ENCODE measurements at regions of chr5 and their contacts with region 1.

Region 1: DNA sequence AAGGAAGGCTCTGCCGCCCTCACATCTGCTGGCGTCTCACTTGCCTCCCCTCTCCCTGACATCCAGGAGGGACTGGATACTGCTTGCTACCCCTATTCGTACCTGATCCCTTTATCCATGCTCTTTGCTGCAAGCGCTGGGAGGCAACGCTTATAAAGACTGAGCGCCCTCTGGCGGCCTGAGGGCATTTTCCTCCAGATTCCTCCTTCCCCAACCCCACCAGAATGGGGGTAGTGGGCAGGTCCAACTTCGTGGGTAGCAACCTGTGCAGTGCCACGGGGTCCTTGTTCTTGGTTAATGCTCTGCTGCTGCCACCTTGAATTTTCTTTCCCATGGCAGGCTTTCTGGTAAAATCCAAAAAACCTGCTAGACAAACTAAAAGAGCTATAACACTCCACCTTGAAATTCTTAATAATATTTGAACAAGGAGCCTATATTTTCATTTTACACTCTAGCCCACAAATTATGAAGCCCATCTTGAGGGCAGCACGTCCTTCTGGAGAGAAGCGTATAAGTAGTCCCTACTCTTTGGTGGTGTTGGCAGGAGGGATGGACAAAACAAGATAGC is 52.4 kb downstream of the JADE2 start:
- DNase-seq: peak; percentile 72
- ATAC-seq: peak; percentile 72
- H3K4me3 Mint-ChIP-seq: no peak overlapping the region
- H3K27ac Mint-ChIP-seq: peak overlapping the region; percentile 27
- H3K4me1 Mint-ChIP-seq: peaks cover 17% of the 10 kb centered on the region
- H3K27me3 Mint-ChIP-seq: no peaks in the 10 kb centered on the region
- CTCF ChIP-seq: peak; percentile 55

Region 2: DNA sequence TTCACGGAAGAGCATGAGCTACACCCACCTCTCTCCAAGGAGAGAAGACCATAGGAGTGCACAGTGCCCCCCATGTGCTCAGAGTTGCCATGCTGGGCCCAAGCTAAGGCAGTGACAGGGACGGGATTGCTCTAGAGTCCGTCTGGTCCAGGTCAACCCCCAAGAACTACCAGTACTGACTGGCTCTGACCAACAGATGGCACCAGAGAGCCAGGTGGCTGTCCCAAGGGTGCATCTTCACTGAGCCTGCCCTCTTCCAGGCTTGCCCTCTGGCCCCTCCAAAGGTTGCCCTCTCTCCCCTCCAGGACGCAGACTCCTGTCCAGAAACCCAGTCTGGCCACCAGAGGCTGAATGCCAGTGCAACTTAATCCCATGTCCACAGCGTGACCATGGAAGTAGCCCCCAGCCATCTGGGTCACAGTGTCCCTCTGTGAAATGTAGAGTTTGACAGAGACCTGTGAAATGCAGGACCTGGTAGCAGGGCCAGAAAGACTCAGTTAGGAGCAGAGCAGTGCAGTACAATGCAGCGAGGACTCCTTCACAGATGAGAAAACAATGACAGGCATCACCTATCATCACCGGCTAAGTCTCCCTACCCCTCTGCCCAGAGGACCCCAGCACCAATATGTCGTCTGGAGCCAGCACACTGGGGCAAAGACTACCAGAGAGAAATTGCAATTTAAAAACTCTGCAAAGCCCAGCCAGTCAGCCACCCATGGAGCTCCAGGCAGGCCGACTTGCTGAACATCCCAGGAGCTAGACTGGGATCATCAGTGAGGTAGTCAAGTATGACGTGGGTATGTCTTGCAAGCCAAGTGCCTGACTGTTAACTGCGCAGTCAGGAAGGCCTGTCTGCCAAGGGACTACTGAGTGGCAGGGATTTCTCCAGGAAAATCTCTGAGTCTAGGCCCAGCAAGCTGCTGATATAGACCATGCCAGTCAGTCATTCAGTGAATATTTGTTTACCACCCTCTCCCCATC is 393.4 kb before region 1 on chr5:
- CTCF ChIA-PET with region 1: no interaction called
- POLR2A ChIA-PET with region 1: no interaction called
- intact Hi-C with region 1: loop called (anchors 5 kb)
- DNase-seq: peak; percentile 59
- ATAC-seq: peak; percentile 99
- H3K4me3 Mint-ChIP-seq: no peak overlapping the region
- H3K27ac Mint-ChIP-seq: no peak overlapping the region
- H3K4me1 Mint-ChIP-seq: peaks cover 3% of the 10 kb centered on the region
- H3K27me3 Mint-ChIP-seq: no peaks in the 10 kb centered on the region
- CTCF ChIP-seq: no peak

Region 3: DNA sequence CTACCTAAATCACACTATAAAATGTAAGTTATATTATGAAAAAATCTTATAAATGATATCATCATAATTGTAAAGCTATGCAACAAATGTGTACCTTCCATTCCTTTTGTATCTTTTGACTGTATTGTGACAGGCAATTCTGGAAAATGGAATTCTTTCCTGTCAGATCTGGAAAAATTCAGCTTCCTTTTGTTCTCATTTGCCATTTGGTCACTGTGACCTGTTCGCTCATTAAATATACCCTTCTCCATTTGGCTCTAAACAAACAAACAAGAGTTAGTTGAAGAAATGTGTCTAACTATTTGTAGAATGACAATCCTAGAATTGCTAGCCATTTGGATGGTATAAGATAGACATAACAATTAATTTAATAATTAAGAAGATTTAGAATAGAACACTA is 273.6 kb before region 1 on chr5:
- CTCF ChIA-PET with region 1: interaction called, 8 read pairs
- POLR2A ChIA-PET with region 1: interaction called, 4 read pairs
- intact Hi-C with region 1: loop called (anchors 2 kb)
- DNase-seq: no peak
- ATAC-seq: no peak
- H3K4me3 Mint-ChIP-seq: no peak overlapping the region
- H3K27ac Mint-ChIP-seq: no peak overlapping the region
- H3K4me1 Mint-ChIP-seq: no peaks in the 10 kb centered on the region
- H3K27me3 Mint-ChIP-seq: no peaks in the 10 kb centered on the region
- CTCF ChIP-seq: no peak

Region 4: DNA sequence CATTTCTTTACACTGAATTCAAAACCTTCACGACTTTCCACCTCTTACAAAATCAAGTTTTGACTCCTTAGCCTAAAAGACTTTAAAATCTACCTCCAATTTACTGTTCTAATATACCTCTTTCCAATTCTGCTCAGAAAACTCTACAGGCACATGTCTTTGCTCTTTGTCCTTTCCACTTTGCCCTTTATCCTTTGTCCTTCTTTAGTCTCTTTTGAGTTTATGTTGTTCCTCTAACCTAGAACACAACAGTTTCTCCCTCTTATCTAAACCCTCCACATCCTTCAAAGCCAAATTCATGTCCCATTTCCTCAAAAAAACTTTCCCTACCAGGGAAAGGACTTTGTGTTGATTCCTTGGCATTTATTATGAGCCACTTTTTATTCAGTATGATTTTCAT is 212.3 kb before region 1 on chr5:
- CTCF ChIA-PET with region 1: no interaction called
- POLR2A ChIA-PET with region 1: no interaction called
- intact Hi-C with region 1: loop called (anchors 2 kb)
- DNase-seq: no peak
- ATAC-seq: no peak
- H3K4me3 Mint-ChIP-seq: peak overlapping the region; percentile 1
- H3K27ac Mint-ChIP-seq: no peak overlapping the region
- H3K4me1 Mint-ChIP-seq: peaks cover 25% of the 10 kb centered on the region
- H3K27me3 Mint-ChIP-seq: no peaks in the 10 kb centered on the region
- CTCF ChIP-seq: no peak

Region 5: DNA sequence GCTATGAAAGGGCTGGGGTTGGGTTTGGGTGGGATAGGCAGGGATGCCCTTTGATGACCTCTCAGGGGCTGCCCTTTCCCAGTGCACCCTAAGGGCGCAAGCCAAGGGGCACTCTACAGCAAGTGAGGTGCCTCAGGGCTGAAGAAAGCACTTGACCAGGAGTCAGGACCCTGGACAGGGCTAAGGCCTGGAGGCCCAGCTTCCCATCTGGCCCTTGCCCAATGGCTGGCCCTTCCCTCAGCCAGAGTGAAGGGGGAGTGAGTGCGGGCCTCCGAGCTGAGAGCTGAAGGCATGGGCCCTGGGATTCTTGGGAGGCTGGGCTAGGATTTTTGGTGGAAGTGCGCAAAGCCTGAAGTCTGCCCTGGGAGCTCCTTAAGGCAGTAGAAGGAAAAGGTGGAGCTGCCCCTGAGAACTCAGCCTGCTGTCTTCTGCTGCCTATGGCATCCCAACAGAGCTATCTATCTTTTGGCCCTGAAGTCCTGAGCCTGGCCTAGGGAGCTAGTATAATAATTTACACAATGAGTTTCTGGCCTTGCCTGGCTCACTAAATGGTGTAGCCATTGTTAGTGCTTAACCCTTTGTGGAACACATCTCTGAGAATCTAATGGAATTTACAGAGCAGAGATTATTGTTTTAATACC is 36.0 kb before region 1 on chr5:
- CTCF ChIA-PET with region 1: interaction called, 8 read pairs
- POLR2A ChIA-PET with region 1: interaction called, 3 read pairs
- intact Hi-C with region 1: loop called (anchors 5 kb)
- DNase-seq: no peak
- ATAC-seq: no peak
- H3K4me3 Mint-ChIP-seq: peak overlapping the region; percentile 78
- H3K27ac Mint-ChIP-seq: peak overlapping the region; percentile 96
- H3K4me1 Mint-ChIP-seq: peaks cover 86% of the 10 kb centered on the region
- H3K27me3 Mint-ChIP-seq: no peaks in the 10 kb centered on the region
- CTCF ChIP-seq: no peak

Measured in activated B cell treated with CpG ODN at 0.5 μM for 24 hours (primary cell).